Activated T-helper 1 cell treated with anti-CD3 and anti-CD28 coated beads, Interleukin-12 subunit alpha, Interleukin-12 subunit beta, Interleukin-2, Interleukin-4 antibody, amounts not matched to agents 30 ng/mL and 10 ng/mL and 1 ng/mL, durations not matched to agents 14 hours and 24 hours and 36 hours (primary cell): ENCODE measurements at regions of chr15 and their contacts with region 1.

Region 1: GRCh38 chr15:60649845-60650548 is 171.1 kb upstream of the ICE2 start:
- DNase-seq: peak; percentile 46
- H3K4me3 Mint-ChIP-seq: peak overlapping the region; percentile 70
- H3K27ac Mint-ChIP-seq: peak overlapping the region; percentile 89
- H3K4me1 Mint-ChIP-seq: peaks cover 69% of the 10 kb centered on the region
- H3K27me3 Mint-ChIP-seq: peaks cover under 1% of the 10 kb centered on the region

Region 2: GRCh38 chr15:60507596-60508424 is 142.2 kb before region 1 on chr15:
- intact Hi-C with region 1: loop called (anchors 5 kb)
- DNase-seq: peak; percentile 51
- H3K4me3 Mint-ChIP-seq: no peak overlapping the region
- H3K27ac Mint-ChIP-seq: peak overlapping the region; percentile 65
- H3K4me1 Mint-ChIP-seq: peaks cover 58% of the 10 kb centered on the region
- H3K27me3 Mint-ChIP-seq: no peaks in the 10 kb centered on the region

Region 3: DNA sequence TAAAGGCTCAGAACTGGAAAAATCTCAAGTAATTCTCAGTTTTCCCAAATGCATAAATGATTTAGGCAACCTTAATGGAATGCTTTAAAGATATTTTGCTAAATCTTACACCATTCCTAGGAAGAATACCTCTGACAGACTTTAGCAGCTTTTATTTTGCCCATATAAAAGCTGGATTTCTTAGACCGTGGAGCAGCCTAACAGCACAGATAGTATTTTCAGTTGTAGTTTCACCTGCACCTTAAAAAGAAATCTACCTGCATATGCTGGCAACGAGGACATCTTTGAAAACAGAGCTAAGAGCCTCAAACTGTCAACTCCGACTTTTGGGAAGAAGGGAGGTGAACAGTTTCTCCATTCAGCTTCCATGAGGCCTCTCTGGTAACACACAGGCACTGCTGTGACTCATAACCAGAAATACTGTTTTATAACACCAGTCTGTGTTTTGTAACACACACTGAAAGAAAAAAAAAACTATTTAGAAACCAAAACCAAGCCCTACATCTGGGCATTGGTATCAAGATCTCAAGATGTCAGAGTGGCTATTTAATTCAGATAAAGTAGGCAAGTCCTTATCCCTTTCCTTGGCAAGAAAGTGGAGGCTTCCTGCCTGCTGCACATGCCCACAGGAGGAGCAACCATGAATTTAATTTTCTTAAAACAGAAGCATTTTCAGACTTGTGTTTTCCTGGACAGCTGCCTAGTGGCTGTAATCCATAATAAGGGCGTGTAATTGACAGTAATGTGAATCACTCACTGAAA is 10.5 kb after region 1 on chr15:
- intact Hi-C with region 1: loop called (anchors 1 kb)
- DNase-seq: no peak
- H3K4me3 Mint-ChIP-seq: no peak overlapping the region
- H3K27ac Mint-ChIP-seq: no peak overlapping the region
- H3K4me1 Mint-ChIP-seq: peaks cover 55% of the 10 kb centered on the region
- H3K27me3 Mint-ChIP-seq: peaks cover 3% of the 10 kb centered on the region

Region 4: GRCh38 chr15:60840306-60840702 is 190.3 kb after region 1 on chr15:
- intact Hi-C with region 1: loop called (anchors 1 kb)
- DNase-seq: no peak
- H3K4me3 Mint-ChIP-seq: peak overlapping the region; percentile 49
- H3K27ac Mint-ChIP-seq: peak overlapping the region; percentile 37
- H3K4me1 Mint-ChIP-seq: peaks cover 66% of the 10 kb centered on the region
- H3K27me3 Mint-ChIP-seq: peaks cover 17% of the 10 kb centered on the region